ENCODE measurements at regions of chr6 and their contacts with region 1.

Region 1: DNA sequence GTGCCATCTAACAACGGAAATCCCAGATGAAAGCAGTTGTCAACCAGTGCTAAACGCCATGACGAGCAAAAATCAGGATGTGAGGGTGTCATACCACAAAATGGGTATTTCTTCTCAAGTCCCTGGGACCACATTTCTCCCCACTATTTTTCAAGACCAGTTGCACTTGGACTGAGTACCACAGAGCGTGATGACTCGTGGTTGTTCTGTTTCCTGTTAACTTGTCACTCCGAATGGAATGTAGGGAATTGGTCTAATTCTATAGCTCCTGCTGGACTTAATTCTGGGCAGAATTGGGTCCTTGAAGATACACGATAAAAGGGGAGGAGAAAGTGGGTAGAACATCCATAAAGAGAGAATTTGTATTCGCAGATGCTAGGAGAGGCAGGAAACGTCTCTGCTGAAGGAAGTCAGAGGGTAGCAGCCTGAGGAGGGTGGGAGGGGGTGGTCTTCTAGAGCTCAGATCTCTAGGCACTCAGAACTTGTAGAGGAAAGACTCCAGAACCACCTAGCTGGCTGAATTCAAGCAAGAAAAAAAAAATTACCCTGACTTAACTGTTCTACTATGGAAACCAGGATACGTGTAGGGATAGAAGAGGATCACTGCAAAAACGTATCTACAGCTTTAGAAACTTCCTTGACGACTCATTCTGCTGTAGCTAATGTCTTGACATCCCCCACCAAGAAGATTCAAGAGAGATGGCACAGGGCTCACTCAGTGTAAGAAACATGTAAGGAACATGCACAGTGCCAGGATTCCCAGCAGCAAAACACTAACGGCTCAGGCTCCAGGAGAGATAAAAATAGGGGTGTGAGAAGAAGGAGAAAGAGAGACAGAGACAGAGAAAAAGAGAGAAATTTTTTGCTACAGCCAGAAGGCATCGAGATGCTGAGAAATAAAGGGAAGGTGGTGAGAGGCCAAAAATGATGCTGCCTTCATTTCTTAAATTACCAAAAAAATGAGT is 494.7 kb downstream of the CD83 start:
- DNase-seq: no peak
- H3K4me3 ChIP-seq: no peak overlapping the region
- H3K27ac ChIP-seq: no peak overlapping the region
- H3K4me1 ChIP-seq: 0 out of 2 replicates have a peak, but pooled peaks cover 6% of the 10 kb centered on the region
- H3K27me3 ChIP-seq: no peaks in the 10 kb centered on the region
- CTCF ChIP-seq: no peak

Region 2: DNA sequence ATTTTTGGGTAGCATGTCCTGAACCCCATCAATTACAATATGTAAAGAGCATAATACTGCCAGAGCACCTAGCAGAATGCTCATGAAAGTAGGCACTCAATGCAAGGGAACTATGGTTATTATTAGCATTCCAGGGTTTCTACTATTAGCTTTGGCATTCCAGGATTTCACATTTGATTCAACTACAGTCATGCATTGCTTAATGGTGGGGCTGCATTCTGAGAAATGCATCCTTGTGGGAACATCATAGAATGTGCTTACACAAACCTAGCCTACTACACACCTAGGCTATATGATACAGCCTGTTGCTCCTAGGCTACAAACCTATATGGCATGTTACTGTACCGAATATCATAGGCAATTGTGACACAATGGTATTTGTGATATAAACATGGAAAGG is 246.9 kb before region 1 on chr6:
- CTCF ChIA-PET with region 1: no interaction called
- POLR2A ChIA-PET with region 1: no interaction called
- intact Hi-C with region 1: no loop called
- DNase-seq: no peak
- H3K4me3 ChIP-seq: no peak overlapping the region
- H3K27ac ChIP-seq: no peak overlapping the region
- H3K4me1 ChIP-seq: no peaks in the 10 kb centered on the region
- H3K27me3 ChIP-seq: no peaks in the 10 kb centered on the region
- CTCF ChIP-seq: no peak

Region 3: GRCh38 chr6:14856177-14856576 is 243.9 kb after region 1 on chr6:
- CTCF ChIA-PET with region 1: no interaction called
- POLR2A ChIA-PET with region 1: interaction called, 20 read pairs
- intact Hi-C with region 1: no loop called
- DNase-seq: no peak
- H3K4me3 ChIP-seq: no peak overlapping the region
- H3K27ac ChIP-seq: no peak overlapping the region
- H3K4me1 ChIP-seq: no peaks in the 10 kb centered on the region
- H3K27me3 ChIP-seq: no peaks in the 10 kb centered on the region
- CTCF ChIP-seq: no peak

Measured in PC-9 (cell line).